ENCODE measurements at regions of chr20 and their contacts with region 1.

Region 1: GRCh38 chr20:5100684-5101347 is 18.9 kb downstream of the PCNA start:
- DNase-seq: peak; percentile 33 to 92 (median 64)
- ATAC-seq: peak; percentile 93
- H3K4me3 ChIP-seq: no peak overlapping the region
- H3K27ac ChIP-seq: peak overlapping the region in 1 of 2 donors; percentile 20
- H3K4me1 ChIP-seq: peaks cover 0 to 8% of the 10 kb centered on the region in 2 donors
- H3K27me3 ChIP-seq: no peaks in the 10 kb centered on the region
- CTCF ChIP-seq: peak; percentile 81 to 89

Region 2: DNA sequence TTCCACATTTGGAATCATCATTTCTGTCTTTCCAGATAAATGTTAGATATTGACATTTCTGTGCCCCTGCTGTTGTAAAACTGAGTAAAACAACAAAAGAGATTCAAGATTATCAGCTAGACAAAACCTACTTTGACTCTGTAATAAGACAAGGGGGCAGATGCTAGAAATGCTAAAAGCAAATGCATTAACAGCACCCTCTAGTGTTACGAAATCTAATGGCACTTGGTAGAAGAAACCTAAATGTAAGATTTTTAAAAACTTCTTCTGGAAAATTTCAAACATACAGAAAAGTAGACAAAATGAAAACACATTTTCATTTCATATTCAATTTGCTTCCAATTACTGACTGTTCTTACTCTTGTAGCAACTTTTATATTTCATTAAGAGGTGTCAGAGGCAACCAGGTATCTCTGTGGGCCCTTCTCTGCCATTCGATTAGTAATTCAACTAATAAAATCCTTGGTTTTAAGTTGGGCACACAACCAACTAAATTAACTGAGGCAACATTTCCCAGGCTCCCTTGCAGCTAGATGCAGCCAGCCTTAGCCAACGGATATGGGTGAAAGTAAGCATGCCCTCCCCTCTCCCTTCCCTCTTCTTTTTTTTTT is 144.5 kb before region 1 on chr20:
- intact Hi-C with region 1: loop called in 1 of 2 experiments (anchors 10 kb)
- DNase-seq: peak in 1 of 4 donors; percentile 61
- ATAC-seq: peak; percentile 69
- H3K4me3 ChIP-seq: no peak overlapping the region
- H3K27ac ChIP-seq: no peak overlapping the region
- H3K4me1 ChIP-seq: peaks cover 7 to 30% of the 10 kb centered on the region in 2 donors
- H3K27me3 ChIP-seq: no peaks in the 10 kb centered on the region
- CTCF ChIP-seq: peak; percentile 73 to 75

Region 3: DNA sequence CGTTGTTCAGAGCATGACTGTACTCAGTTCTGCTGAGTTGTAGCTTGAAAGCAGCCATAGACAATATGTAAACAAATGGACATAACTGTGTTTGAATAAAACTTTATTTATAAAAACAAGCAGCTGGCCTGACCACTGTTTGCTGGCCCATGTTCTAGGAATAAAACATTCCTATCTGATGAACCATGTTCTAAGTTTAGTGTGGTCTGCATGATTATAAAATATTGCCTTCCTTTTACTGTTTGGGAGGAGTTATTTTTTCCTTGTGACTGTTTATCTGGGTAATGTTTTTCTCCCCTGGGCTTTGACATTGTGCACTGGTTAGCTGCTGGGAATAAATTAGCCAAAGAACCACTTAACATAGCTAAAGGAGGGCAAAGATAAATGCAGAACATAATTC is 81.1 kb after region 1 on chr20:
- intact Hi-C with region 1: no loop called
- DNase-seq: no peak
- ATAC-seq: no peak
- H3K4me3 ChIP-seq: no peak overlapping the region
- H3K27ac ChIP-seq: no peak overlapping the region
- H3K4me1 ChIP-seq: no peaks in the 10 kb centered on the region
- H3K27me3 ChIP-seq: no peaks in the 10 kb centered on the region
- CTCF ChIP-seq: no peak

Measured in left lung (tissue), 14 donors.